ENCODE measurements at regions of chr15 and their contacts with region 1.

Region 1: GRCh38 chr15:66851226-66852071 is 149.4 kb downstream of the SMAD6 start:
- DNase-seq: peak; percentile 84
- ATAC-seq: peak; percentile 98
- H3K4me3 ChIP-seq: peak overlapping the region in 1 of 5 experiments; percentile 6
- H3K4me3 Mint-ChIP-seq: peak overlapping the region; percentile 49
- H3K27ac ChIP-seq: no peak overlapping the region
- H3K27ac Mint-ChIP-seq: no peak overlapping the region
- H3K4me1 ChIP-seq: peaks cover 7 to 11% of the 10 kb centered on the region in 2 donors
- H3K4me1 Mint-ChIP-seq: peaks cover 11% of the 10 kb centered on the region
- H3K27me3 ChIP-seq: peaks cover 0 to 12% (median 4%) of the 10 kb centered on the region in 4 experiments
- H3K27me3 Mint-ChIP-seq: peaks cover 12% of the 10 kb centered on the region
- CTCF ChIP-seq: peak; percentile 99

Region 2: GRCh38 chr15:66611257-66612053 is 240.0 kb before region 1 on chr15:
- CTCF ChIA-PET with region 1: interaction called, 83 read pairs
- POLR2A ChIA-PET with region 1: no interaction called
- intact Hi-C with region 1: no loop called
- DNase-seq: no peak
- ATAC-seq: no peak
- H3K4me3 ChIP-seq: no peak overlapping the region
- H3K4me3 Mint-ChIP-seq: no peak overlapping the region
- H3K27ac ChIP-seq: no peak overlapping the region
- H3K27ac Mint-ChIP-seq: no peak overlapping the region
- H3K4me1 ChIP-seq: peaks cover 30 to 31% of the 10 kb centered on the region in 2 donors
- H3K4me1 Mint-ChIP-seq: peaks cover 32% of the 10 kb centered on the region
- H3K27me3 ChIP-seq: no peaks in the 10 kb centered on the region
- H3K27me3 Mint-ChIP-seq: no peaks in the 10 kb centered on the region
- CTCF ChIP-seq: no peak

Region 3: DNA sequence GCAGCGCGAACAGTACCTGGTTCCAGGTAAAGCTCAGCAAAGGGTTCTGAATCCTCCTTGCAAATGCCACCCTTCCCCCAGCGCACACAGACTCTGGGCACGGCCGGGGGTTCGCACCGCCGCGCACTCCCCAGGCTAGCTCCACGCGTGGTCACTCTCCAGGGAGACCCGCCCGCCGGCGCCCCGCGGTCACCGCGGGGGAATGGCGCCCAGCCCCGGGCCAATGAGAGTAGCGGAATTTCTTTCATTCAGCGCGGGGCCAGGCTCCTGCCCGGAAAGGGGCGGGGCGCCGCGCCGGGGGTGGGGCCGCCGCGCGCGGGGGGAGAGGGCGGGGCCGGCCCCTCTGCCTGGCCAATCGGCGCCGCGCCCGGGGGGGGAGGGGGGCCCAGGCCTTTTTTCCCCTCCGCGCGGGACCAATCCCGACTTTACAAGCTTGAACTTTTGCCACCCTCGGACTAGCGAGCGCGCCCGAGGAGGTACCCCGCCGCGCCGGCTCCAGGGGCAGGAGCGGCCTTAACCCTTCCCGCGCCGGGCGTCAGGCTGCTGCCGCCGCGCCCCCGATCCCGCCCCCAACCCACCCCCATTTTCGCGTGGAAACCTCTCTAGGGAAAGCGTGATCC is 150.5 kb before region 1 on chr15:
- CTCF ChIA-PET with region 1: interaction called, 11 read pairs
- POLR2A ChIA-PET with region 1: no interaction called
- intact Hi-C with region 1: no loop called
- DNase-seq: peak; percentile 88
- ATAC-seq: peak; percentile 84
- H3K4me3 ChIP-seq: peak overlapping the region; percentile 63 to 80 (median 77)
- H3K4me3 Mint-ChIP-seq: peak overlapping the region; percentile 94
- H3K27ac ChIP-seq: peak overlapping the region in 1 of 2 donors; percentile 47
- H3K27ac Mint-ChIP-seq: peak overlapping the region; percentile 85
- H3K4me1 ChIP-seq: peaks cover 17 to 27% of the 10 kb centered on the region in 2 donors
- H3K4me1 Mint-ChIP-seq: peaks cover 19% of the 10 kb centered on the region
- H3K27me3 ChIP-seq: peaks cover 0 to 34% (median 7%) of the 10 kb centered on the region in 4 experiments
- H3K27me3 Mint-ChIP-seq: peaks cover 17% of the 10 kb centered on the region
- CTCF ChIP-seq: no peak

Region 4: DNA sequence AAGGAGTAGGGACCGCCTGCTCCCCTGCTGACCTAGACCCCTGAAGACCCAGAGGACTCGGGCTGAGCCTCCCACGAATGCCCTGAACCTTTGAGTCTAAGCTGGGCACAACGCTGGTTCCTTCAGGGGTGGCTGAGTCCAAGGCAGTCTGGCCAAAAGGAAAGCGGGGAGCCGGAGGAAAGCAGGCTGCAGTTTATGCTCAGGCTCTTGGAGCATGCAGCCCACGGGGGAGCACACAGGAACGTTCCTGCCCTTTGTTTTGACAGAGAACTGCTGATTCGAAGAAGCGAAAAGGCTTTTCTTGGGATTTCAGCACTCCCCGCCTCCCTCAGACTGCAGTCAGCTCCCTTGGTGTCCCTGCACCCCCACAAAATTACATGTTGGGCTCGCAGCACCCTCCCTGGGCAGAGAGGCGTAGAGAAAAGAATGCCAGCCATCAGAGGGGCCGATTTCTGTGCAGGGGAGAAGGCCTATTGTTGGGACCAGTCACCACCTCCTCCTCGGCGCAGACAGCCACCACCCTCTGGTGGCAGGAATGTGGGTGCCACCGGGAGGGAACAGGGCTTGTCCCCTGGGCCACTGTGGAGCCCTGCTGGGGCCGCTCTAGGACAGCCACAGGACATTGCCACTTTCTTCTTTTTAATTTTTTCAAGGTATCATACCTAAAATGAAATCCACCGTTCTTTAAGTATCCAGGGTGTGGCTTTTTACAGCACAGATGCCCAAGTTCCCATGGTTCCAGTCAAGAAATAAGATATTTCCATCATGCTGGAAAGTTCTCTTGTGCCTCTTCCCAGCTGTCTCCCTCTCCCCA is 77.2 kb before region 1 on chr15:
- CTCF ChIA-PET with region 1: interaction called, 15 read pairs
- POLR2A ChIA-PET with region 1: interaction called, 10 read pairs
- intact Hi-C with region 1: loop called (anchors 5 kb)
- DNase-seq: peak; percentile 63
- ATAC-seq: peak; percentile 67
- H3K4me3 ChIP-seq: no peak overlapping the region
- H3K4me3 Mint-ChIP-seq: no peak overlapping the region
- H3K27ac ChIP-seq: no peak overlapping the region
- H3K27ac Mint-ChIP-seq: no peak overlapping the region
- H3K4me1 ChIP-seq: no peaks in the 10 kb centered on the region
- H3K4me1 Mint-ChIP-seq: no peaks in the 10 kb centered on the region
- H3K27me3 ChIP-seq: no peaks in the 10 kb centered on the region
- H3K27me3 Mint-ChIP-seq: no peaks in the 10 kb centered on the region
- CTCF ChIP-seq: peak; percentile 70

Region 5: DNA sequence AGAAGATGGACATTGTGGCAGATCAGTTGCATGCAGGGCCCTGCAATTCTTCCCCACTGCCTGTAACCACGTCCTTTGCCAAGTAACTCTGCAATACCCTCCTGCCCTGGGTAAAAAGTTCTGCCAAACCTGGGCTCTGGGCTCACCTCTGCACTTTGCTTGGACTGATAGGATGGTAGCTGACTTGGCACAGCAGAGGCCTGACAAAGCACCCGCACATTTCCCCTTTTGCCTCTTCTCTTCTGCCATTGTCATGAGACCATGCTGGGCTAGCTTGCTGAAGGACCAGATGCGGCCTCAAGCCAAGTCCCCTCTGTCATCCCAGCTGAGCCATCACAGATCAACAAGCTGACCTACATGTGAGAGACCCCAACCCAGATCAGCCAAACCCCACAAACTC is 27.0 kb before region 1 on chr15:
- CTCF ChIA-PET with region 1: interaction called, 17 read pairs
- POLR2A ChIA-PET with region 1: no interaction called
- intact Hi-C with region 1: no loop called
- DNase-seq: no peak
- ATAC-seq: no peak
- H3K4me3 ChIP-seq: no peak overlapping the region
- H3K4me3 Mint-ChIP-seq: no peak overlapping the region
- H3K27ac ChIP-seq: no peak overlapping the region
- H3K27ac Mint-ChIP-seq: no peak overlapping the region
- H3K4me1 ChIP-seq: no peaks in the 10 kb centered on the region
- H3K4me1 Mint-ChIP-seq: no peaks in the 10 kb centered on the region
- H3K27me3 ChIP-seq: no peaks in the 10 kb centered on the region
- H3K27me3 Mint-ChIP-seq: no peaks in the 10 kb centered on the region
- CTCF ChIP-seq: no peak

Region 6: GRCh38 chr15:66862878-66863335 is 11.5 kb after region 1 on chr15:
- CTCF ChIA-PET with region 1: interaction called, 34 read pairs
- POLR2A ChIA-PET with region 1: interaction called, 3 read pairs
- intact Hi-C with region 1: loop called (anchors 1 kb)
- DNase-seq: peak; percentile 91
- ATAC-seq: peak; percentile 61
- H3K4me3 ChIP-seq: no peak overlapping the region
- H3K4me3 Mint-ChIP-seq: no peak overlapping the region
- H3K27ac ChIP-seq: peak overlapping the region; percentile 51 to 61
- H3K27ac Mint-ChIP-seq: peak overlapping the region; percentile 63
- H3K4me1 ChIP-seq: peaks cover 33 to 47% of the 10 kb centered on the region in 2 donors
- H3K4me1 Mint-ChIP-seq: peaks cover 49% of the 10 kb centered on the region
- H3K27me3 ChIP-seq: peaks cover 0 to 3% (median 0%) of the 10 kb centered on the region in 4 experiments
- H3K27me3 Mint-ChIP-seq: no peaks in the 10 kb centered on the region
- CTCF ChIP-seq: peak; percentile 89

Measured in B cell (primary cell).